ENCODE measurements at regions of chr17 and their contacts with region 1.

Region 1: DNA sequence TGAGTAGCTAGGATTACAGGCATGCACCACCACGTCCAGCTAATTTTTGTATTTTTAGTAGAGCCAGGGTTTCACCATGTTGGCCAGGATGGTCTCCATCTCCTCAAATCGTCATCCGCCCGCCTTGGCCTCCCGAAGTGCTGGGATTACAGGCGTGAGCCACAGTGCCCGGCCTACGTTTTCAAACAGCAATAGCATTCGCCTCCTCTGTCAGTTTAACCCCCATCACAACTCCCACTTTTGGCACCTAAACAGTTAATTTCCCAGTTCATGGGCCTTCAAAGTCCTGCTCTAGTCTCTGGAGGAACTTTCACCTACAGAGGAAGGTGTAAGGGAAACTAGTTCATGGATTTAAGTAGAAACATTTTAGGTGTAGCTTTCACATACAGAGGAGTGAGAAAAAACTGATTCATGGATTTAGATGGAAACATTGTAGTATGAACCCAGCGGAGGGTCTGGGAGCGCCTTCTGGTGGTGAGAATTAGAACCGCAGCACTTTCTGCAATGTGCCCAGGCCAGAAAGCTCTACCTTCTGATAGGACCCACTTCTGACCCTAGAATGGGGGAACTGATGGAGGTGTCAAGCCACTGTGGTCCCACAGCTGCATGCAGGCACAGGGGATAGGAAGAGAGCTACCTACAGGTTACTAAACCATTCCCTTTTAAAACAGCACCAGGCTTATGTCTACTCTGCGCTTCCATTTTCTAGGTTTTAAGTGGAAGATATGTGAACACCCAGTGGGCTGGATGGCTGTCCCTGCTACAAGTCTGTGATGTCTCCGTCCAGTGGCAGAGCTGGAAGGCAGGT is 12.0 kb upstream of the MEOX1 start:
- DNase-seq: peak; percentile 83
- H3K4me3 ChIP-seq: no peak overlapping the region
- H3K27ac ChIP-seq: no peak overlapping the region
- H3K4me1 ChIP-seq: peaks cover 0 to 34% (median 21%) of the 10 kb centered on the region in 4 donors
- H3K27me3 ChIP-seq: no peaks in the 10 kb centered on the region
- CTCF ChIP-seq: peak; percentile 81 to 94 (median 92)
- EP300 ChIP-seq: no peak
- POLR2A ChIP-seq: no peak

Region 2: GRCh38 chr17:43456661-43457361 is 216.9 kb before region 1 on chr17:
- intact Hi-C with region 1: no loop called
- DNase-seq: peak; percentile 75
- H3K4me3 ChIP-seq: no peak overlapping the region
- H3K27ac ChIP-seq: peak overlapping the region in 2 of 4 donors; percentile 53 to 56
- H3K4me1 ChIP-seq: peaks cover 0 to 11% (median 3%) of the 10 kb centered on the region in 4 donors
- H3K27me3 ChIP-seq: no peaks in the 10 kb centered on the region
- CTCF ChIP-seq: no peak
- EP300 ChIP-seq: no peak
- POLR2A ChIP-seq: no peak

Region 3: GRCh38 chr17:43576563-43577229 is 97.0 kb before region 1 on chr17:
- intact Hi-C with region 1: loop called (anchors 1 kb)
- DNase-seq: peak; percentile 77
- H3K4me3 ChIP-seq: no peak overlapping the region
- H3K27ac ChIP-seq: no peak overlapping the region
- H3K4me1 ChIP-seq: peaks cover 0 to 18% (median 15%) of the 10 kb centered on the region in 4 donors
- H3K27me3 ChIP-seq: no peaks in the 10 kb centered on the region
- CTCF ChIP-seq: peak; percentile 88 to 96 (median 92)
- EP300 ChIP-seq: no peak
- POLR2A ChIP-seq: no peak

Measured in sigmoid colon (tissue), 7 donors.